ENCODE measurements at regions of chr14 and their contacts with region 1.

Region 1: GRCh38 chr14:100375963-100376735 is 53.0 kb downstream of the SLC25A47 start:
- DNase-seq: peak; percentile 87 to 96 (median 90)
- ATAC-seq: peak; percentile 90
- H3K4me3 ChIP-seq: peak within 1 kb of the TSS; percentile 78
- H3K4me3 Mint-ChIP-seq: peak within 1 kb of the TSS; percentile 79 to 95 (median 93)
- H3K27ac ChIP-seq: peak within 1 kb of the TSS; percentile 75
- H3K27ac Mint-ChIP-seq: peak within 1 kb of the TSS; percentile 71 to 96 (median 91)
- H3K4me1 ChIP-seq: peaks cover 19 to 26% of the 10 kb centered on the region in 2 donors
- H3K4me1 Mint-ChIP-seq: peaks cover 23 to 52% (median 37%) of the 10 kb centered on the region in 7 donors
- H3K27me3 ChIP-seq: no peaks in the 10 kb centered on the region
- H3K27me3 Mint-ChIP-seq: no peaks in the 10 kb centered on the region

Region 2: DNA sequence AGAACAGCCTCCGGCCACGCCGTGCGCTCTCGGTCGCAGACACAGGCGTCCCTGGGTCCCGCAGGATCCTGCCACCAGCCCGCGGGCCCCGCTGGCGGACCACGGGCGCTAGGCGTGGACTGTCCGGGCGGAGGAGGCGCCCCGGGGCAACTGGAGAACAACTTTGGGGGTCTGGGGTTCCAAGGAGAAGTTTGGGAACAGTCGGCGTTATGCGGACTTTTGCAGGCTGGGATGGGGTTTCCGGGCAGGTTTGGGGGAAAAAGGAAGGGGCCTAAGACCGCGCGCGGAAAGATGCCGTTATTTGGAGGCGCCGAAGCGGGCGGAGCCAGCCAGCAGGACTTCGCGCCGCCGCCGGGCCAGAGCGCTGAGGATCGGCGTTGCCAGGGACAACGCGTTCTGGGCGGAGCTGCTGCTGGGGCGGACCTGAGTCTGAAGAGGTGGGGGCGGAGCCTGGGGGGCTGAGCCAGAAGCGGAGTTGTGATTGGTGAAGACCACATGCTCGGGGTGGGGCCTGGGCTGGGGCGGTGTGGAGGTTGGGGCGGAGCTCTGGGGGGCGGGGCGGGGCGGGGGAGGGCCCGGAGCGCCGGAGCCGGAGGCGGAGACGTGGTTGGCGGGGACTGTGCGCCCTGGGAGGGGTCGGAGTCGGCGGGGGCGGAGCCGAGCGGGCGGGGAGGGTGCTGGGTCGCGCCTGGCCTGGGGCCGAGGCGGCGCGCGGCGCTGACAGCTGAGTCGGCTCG is 692.4 kb before region 1 on chr14 and contains the start of gene CYP46A1:
- CTCF ChIA-PET with region 1: no interaction called
- POLR2A ChIA-PET with region 1: no interaction called
- intact Hi-C with region 1: loop called (anchors 2 to 5 kb)
- DNase-seq: peak; percentile 97 to 99 (median 99)
- ATAC-seq: peak; percentile 98
- H3K4me3 ChIP-seq: peak within 1 kb of the TSS; percentile 93
- H3K4me3 Mint-ChIP-seq: peak within 1 kb of the TSS; percentile 79 to 96 (median 92)
- H3K27ac ChIP-seq: peak within 1 kb of the TSS; percentile 75
- H3K27ac Mint-ChIP-seq: peak within 1 kb of the TSS; percentile 52 to 94 (median 83)
- H3K4me1 ChIP-seq: peaks cover 5 to 12% of the 10 kb centered on the region in 2 donors
- H3K4me1 Mint-ChIP-seq: peaks cover 2 to 29% (median 11%) of the 10 kb centered on the region in 7 donors
- H3K27me3 ChIP-seq: no peaks in the 10 kb centered on the region
- H3K27me3 Mint-ChIP-seq: peaks cover 2 to 34% (median 32%) of the 10 kb centered on the region in 5 donors
- total RNA-seq, gene CYP46A1: 0.13 to 0.34 (median 0.32) TPM in 4 of 5 experiments, not detected in the other

Region 3: DNA sequence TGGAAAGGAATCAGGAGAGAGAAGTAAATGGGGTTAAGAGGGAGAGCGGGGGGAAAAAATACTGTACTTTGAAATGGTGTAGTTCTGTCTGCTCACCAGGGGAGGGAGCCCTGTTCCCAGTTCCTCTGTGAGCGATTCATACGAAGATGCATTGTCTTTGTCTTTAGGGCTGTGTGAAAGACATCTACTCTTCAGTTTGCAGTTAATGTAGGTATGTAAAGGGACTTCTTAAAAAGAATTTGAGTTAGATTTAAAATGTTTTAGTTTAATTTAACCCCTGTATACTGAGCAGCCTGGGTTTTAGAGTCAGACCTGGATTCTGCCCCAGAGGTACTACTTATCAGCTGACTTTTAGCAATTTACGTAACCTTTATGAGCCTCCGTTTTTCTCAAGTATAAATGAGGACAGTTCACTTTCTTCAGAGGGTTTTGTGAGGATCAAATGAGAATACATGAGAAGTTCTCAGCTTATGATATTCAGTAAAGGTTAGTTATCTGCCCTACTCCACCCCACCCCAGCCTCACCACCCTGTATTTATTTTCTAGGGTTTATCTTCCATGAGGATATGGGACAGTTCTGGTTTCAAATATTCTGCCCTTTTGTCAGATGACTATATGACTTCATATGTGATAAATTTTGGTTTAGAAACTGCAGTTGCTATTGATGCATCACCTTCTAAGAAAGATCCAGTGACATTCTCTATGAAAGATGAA is 393.5 kb before region 1 on chr14:
- CTCF ChIA-PET with region 1: interaction called, 3 read pairs
- POLR2A ChIA-PET with region 1: no interaction called
- intact Hi-C with region 1: loop called in 1 of 2 experiments (anchors 1 kb)
- DNase-seq: peak; percentile 35 to 77 (median 72)
- ATAC-seq: peak; percentile 100
- H3K4me3 ChIP-seq: no peak overlapping the region
- H3K4me3 Mint-ChIP-seq: no peak overlapping the region
- H3K27ac ChIP-seq: no peak overlapping the region
- H3K27ac Mint-ChIP-seq: peak overlapping the region in 6 of 9 donors; percentile 3 to 85 (median 68)
- H3K4me1 ChIP-seq: peaks cover 0 to 15% of the 10 kb centered on the region in 2 donors
- H3K4me1 Mint-ChIP-seq: peaks cover 5 to 21% (median 19%) of the 10 kb centered on the region in 7 donors
- H3K27me3 ChIP-seq: no peaks in the 10 kb centered on the region
- H3K27me3 Mint-ChIP-seq: no peaks in the 10 kb centered on the region

Region 4: DNA sequence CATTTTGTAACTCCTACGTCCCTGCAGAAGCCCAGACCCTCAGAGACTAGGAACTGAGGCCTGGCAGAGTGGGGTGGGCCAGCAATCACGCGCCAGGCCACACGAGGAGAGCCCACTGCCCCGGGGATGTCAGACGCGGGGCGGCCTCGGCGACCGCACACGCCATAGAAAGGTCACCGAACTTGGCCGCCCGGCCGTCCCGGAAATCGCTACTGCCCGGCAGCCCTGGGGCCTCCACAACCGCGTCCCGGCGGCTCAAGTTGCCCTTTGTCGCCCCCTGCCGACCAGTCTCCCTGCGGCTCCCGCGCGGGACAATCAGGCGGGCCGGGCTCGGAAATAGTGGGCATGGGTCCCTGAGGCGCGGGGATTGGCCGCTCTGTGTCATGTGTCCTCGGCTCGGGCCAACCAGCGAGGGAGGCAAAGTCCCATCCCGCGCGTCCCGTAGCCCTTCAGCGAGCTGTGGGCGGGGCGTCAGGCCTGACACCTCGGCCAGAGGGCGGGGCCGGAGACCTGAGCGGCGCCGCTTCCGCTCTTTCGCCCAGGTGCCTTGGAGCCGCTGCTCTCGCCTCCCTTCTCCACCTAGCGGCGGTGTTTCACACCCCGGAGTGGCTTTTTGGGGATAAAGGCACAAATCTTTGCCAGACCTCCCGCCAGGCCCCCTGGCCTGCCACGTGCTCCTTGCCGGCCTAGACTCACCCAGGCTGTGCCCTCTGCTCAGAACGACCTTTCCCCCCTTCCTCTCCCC is 183.3 kb before region 1 on chr14:
- CTCF ChIA-PET with region 1: no interaction called
- POLR2A ChIA-PET with region 1: no interaction called
- intact Hi-C with region 1: loop called (anchors 1 to 2 kb)
- DNase-seq: peak; percentile 98 to 100 (median 99)
- ATAC-seq: peak; percentile 99
- H3K4me3 ChIP-seq: peak overlapping the region; percentile 56
- H3K4me3 Mint-ChIP-seq: peak overlapping the region; percentile 25 to 80 (median 60)
- H3K27ac ChIP-seq: peak overlapping the region; percentile 74
- H3K27ac Mint-ChIP-seq: peak overlapping the region; percentile 84 to 95 (median 93)
- H3K4me1 ChIP-seq: peaks cover 6 to 13% of the 10 kb centered on the region in 2 donors
- H3K4me1 Mint-ChIP-seq: peaks cover 5 to 18% (median 15%) of the 10 kb centered on the region in 7 donors
- H3K27me3 ChIP-seq: no peaks in the 10 kb centered on the region
- H3K27me3 Mint-ChIP-seq: no peaks in the 10 kb centered on the region

Region 5: DNA sequence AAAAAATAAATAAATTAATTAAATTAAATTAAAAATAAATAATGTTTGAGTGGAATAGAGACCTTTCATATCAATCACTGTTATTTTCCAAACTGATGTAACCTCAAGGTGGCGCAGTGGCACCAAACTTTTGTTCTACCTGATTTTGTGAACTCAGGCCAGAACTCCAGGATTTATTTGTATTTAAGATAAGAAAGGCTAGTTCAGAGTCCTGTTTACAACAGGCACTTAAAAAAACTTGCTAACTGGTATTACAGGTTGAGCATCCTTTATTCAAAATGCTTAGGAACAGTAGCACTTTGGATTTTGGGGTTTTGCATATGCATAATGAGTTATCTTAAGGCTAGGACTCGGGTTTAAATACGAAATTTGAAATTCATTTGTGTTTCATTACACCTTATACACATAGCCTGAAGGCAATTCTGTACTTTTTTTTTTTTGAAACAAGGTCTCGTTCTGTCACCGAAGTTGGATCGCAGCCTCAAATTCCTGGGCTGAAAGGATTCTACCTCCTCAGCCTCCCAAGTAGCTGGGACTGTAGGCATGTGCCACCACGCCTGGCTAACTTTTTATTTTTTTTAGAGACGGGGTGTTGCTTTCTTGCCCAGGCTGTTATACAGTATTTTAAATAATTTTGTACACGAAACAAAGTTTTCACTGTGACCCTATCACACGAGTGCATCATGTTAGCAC is 104.8 kb before region 1 on chr14:
- CTCF ChIA-PET with region 1: no interaction called
- POLR2A ChIA-PET with region 1: no interaction called
- intact Hi-C with region 1: loop called in 1 of 2 experiments (anchors 1 kb)
- DNase-seq: peak in 2 of 9 donors; percentile 22
- ATAC-seq: peak; percentile 32
- H3K4me3 ChIP-seq: no peak overlapping the region
- H3K4me3 Mint-ChIP-seq: no peak overlapping the region
- H3K27ac ChIP-seq: no peak overlapping the region
- H3K27ac Mint-ChIP-seq: peak overlapping the region in 1 of 9 donors; percentile 59
- H3K4me1 ChIP-seq: peaks cover 21 to 34% of the 10 kb centered on the region in 2 donors
- H3K4me1 Mint-ChIP-seq: peaks cover 28 to 81% (median 70%) of the 10 kb centered on the region in 7 donors
- H3K27me3 ChIP-seq: no peaks in the 10 kb centered on the region
- H3K27me3 Mint-ChIP-seq: no peaks in the 10 kb centered on the region

Region 6: GRCh38 chr14:100547633-100548294 is 171.6 kb after region 1 on chr14:
- CTCF ChIA-PET with region 1: no interaction called
- POLR2A ChIA-PET with region 1: no interaction called
- intact Hi-C with region 1: loop called (anchors 2 to 5 kb)
- DNase-seq: peak in 6 of 9 donors; percentile 43 to 90 (median 79)
- ATAC-seq: peak; percentile 76
- H3K4me3 ChIP-seq: peak overlapping the region; percentile 50
- H3K4me3 Mint-ChIP-seq: peak overlapping the region; percentile 51 to 87 (median 82)
- H3K27ac ChIP-seq: peak overlapping the region; percentile 73
- H3K27ac Mint-ChIP-seq: peak overlapping the region; percentile 58 to 98 (median 89)
- H3K4me1 ChIP-seq: peaks cover 27 to 28% of the 10 kb centered on the region in 2 donors
- H3K4me1 Mint-ChIP-seq: peaks cover 9 to 38% (median 22%) of the 10 kb centered on the region in 7 donors
- H3K27me3 ChIP-seq: no peaks in the 10 kb centered on the region
- H3K27me3 Mint-ChIP-seq: no peaks in the 10 kb centered on the region

Measured in naive thymus-derived CD4-positive, alpha-beta T cell (primary cell).